Activated naive CD4-positive, alpha-beta T cell treated with anti-CD3 and anti-CD28 coated beads for 36 hours (primary cell): ENCODE measurements at regions of chr1 and their contacts with region 1.

Region 1: DNA sequence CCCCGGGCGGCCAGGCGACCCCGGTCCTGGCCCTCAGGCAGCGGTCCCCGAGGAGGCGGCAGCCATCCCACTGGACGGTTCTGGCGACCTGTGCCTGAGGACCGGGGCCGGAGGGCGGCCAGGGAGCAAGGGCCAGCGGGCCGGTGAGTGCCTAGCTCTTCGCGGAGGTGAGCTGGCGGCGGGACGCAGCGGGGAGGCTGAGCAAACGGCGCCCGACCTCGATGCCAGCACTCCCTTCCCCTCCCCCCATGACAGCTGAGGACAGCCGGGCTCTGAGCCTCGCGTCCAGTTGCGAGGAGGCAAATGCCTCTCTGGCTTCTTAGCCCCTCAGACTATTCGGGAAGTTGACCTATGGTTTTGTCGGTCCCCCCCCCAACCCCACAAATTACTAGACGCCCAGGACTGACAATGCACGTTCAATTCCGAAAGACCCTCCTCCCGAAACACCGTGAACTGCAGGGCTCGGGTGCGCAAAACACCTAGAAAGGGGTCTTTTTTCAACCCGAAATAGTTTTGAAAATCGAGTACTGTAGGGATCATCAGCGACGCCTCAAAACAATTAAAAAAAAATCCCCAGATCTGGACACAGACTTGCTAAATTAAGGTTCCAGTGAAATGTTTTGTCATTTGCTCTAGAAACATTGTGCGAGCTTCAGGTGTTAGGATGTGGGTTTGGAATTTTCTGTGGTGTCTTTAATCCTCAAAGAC is 8.3 kb downstream of the CDKN2C start:
- DNase-seq: peak; percentile 27
- H3K4me3 Mint-ChIP-seq: peak overlapping the region; percentile 62
- H3K27ac Mint-ChIP-seq: no peak overlapping the region
- H3K4me1 Mint-ChIP-seq: peaks cover 18% of the 10 kb centered on the region
- H3K27me3 Mint-ChIP-seq: peaks cover 38% of the 10 kb centered on the region

Region 2: DNA sequence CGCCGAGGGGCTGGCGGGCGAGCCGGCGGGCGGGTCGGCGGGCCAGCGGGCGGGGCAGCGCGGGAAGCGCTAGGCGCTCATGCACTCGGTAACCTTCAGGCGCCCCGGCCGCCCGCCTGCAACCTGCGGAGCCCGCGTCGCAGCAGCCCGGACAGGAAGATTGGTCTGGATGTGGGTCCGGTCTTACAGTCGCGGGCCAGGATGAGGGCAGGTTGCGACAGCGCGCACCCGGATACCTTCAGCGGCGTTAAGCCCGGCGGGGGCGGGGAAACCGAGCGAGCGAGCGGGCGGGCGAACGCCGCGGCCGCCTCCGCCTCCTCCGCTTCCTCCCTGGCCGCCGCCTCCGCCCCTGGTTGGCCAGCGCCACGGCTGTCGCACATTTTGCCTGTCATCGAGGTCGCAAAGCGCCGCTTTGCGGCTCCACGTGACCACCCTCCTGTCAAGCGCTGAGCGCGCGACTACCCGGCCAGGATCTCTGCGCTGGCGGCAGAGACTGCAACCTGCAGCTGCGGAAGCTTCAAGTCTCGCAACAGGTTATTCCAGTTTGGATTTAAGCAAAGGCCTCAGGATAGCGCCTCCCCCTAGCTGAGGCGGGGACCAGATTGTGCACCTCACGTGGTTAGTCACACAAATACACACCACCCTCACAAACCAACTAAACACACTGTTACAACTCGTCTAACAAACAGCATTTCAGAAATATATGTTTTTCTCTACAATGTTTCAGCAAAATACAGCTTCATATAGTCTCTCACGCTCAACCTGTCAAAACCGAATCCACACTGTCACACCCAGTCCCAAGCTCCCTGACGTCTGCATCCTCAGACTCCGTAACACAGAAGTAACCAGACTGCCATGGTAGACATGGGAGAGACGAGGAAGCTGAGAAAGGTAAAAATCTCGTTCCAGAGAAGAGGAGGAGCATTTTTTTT is 18.1 kb before region 1 on chr1 and contains the start of gene FAF1:
- CTCF ChIA-PET with region 1: no interaction called
- intact Hi-C with region 1: loop called (anchors 1 kb)
- DNase-seq: peak; percentile 97
- H3K4me3 Mint-ChIP-seq: peak within 1 kb of the TSS; percentile 86
- H3K27ac Mint-ChIP-seq: peak within 1 kb of the TSS; percentile 85
- H3K4me1 Mint-ChIP-seq: peaks cover 25% of the 10 kb centered on the region
- H3K27me3 Mint-ChIP-seq: no peaks in the 10 kb centered on the region
- total RNA-seq, gene FAF1: 87.9 to 90.1 TPM